ENCODE measurements at regions of chr13 and their contacts with region 1.

Region 1: DNA sequence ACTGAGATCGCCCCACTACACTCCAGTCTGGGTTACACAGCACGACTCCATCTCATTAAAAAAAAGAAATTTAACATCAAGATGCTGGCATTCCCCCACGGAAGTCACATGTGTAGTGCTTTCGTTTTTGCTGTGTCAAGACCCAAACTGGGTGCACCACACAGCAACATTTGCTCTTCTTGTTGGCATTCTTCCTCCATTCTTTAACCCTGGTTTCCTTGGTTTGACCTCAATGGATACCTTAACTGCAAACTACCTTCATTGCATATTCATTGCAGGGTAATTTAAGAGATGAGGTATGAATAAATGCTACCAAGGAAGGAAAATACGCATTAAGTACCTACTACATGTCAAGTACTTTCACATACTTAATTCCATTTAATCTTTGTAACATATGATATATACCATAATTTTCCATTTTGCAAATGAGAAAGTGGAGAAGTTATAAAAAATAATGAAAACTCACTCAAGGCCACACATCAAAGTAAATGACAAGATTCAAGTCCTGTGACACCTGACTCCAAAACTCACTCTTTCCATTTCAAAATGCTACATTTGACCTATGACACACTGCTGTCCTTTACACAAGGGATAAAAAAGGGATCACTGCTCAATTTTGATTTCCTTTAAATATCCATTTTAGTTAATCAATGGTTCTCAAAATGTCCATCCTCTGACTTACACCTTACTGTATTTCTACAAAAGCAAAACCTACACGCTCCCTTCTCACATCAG is 59.2 kb downstream of the STK24 start:
- DNase-seq: peak; percentile 82
- H3K4me3 Mint-ChIP-seq: peak overlapping the region; percentile 67
- H3K27ac Mint-ChIP-seq: peak overlapping the region; percentile 92
- H3K4me1 Mint-ChIP-seq: peaks cover 86% of the 10 kb centered on the region
- H3K27me3 Mint-ChIP-seq: no peaks in the 10 kb centered on the region

Region 2: DNA sequence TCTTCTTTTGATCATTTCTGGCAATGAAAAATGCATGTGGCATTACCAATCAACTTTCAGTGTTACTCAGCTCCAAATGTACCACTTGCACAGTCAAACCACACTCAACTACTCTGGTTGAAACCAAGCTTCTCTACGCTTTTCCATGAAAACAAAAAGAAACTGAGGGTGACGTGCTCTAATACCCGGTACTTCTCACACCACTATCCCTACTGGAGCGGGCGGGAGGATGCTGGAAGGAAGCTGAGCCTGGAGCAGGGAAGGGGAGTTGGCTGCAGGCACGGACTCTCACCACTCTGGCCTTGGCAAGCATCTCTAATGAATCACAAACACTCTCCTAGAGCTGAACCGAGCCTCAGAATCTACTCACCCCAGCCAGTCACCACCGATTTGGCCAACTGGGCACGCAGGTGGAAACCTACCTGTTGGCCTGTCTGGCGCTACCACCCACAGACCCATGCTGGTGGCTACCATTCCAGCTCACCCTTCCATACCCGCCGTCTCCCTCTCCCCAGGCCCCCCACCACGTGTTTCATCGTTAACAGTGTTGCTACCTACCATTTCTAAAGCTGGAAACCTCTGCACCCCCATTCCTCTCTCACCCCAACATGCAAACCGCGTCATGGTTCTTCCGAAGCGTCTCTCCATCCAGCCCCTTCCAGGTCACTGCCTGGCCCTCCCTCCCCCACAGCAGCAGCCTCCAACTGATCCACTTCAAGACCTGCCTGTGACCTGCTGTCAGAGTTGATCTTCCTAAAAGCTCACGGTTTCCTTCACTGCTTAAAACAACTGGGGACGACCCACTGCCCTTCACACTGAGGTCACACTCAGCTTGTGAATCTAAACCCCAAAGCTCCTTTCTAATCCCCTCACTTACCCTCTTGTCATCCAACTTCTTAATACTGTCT is 11.2 kb after region 1 on chr13:
- intact Hi-C with region 1: loop called (anchors 1 kb)
- DNase-seq: no peak
- H3K4me3 Mint-ChIP-seq: peak overlapping the region; percentile 21
- H3K27ac Mint-ChIP-seq: peak overlapping the region; percentile 87
- H3K4me1 Mint-ChIP-seq: peaks cover 62% of the 10 kb centered on the region
- H3K27me3 Mint-ChIP-seq: no peaks in the 10 kb centered on the region

Region 3: DNA sequence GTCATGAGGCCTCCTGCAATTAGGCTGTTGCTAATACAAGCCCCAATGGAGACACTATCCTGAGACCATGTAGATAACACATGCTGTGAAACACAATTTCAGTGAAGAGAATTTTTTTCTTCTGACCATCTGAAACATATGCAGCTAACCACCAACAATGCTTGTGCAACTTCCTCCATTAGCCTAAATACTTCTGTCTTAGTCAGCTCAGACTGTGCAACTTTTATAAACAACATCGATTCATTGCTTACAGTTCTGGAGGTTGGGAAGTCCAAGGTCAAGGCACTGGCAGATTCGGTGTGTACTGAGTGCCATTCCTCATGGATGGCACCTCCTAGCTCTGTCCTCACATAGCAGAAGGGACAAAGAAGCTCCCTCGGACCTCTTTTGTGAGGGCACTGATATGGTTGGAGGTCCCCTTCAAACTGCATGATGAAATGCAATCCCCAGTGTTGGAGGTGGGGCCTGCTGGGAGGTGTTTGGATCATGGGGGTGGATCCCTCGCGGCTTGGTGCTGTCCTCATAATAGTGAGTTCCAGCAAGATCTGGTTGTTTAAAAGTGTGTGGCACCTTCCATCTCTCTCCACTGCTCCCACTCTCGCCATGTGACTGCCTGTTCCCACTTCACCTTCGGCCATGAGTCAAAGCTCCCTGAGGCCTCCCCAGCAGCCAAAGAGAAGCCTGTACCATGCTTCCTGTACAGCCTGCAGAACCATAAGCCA is 31.4 kb after region 1 on chr13:
- intact Hi-C with region 1: loop called (anchors 2 kb)
- DNase-seq: no peak
- H3K4me3 Mint-ChIP-seq: peak overlapping the region; percentile 15
- H3K27ac Mint-ChIP-seq: peak overlapping the region; percentile 76
- H3K4me1 Mint-ChIP-seq: peaks cover 61% of the 10 kb centered on the region
- H3K27me3 Mint-ChIP-seq: no peaks in the 10 kb centered on the region

Region 4: GRCh38 chr13:98664039-98664438 is 146.3 kb after region 1 on chr13:
- intact Hi-C with region 1: loop called (anchors 5 kb)
- DNase-seq: peak; percentile 73
- H3K4me3 Mint-ChIP-seq: peak overlapping the region; percentile 5
- H3K27ac Mint-ChIP-seq: peak overlapping the region; percentile 82
- H3K4me1 Mint-ChIP-seq: peaks cover 14% of the 10 kb centered on the region
- H3K27me3 Mint-ChIP-seq: peaks cover 18% of the 10 kb centered on the region